ENCODE measurements at regions of chr3 and their contacts with region 1.

Region 1: GRCh38 chr3:126113733-126114442 is 30.0 kb upstream of the SLC41A3 start:
- DNase-seq: no peak
- ATAC-seq: peak; percentile 98
- H3K4me3 ChIP-seq: no peak overlapping the region
- H3K27ac ChIP-seq: no peak overlapping the region
- H3K4me1 ChIP-seq: peaks cover under 1 to 2% of the 10 kb centered on the region in 2 experiments; a peak in 2 of 4 replicates
- H3K27me3 ChIP-seq: no peaks in the 10 kb centered on the region
- CTCF ChIP-seq: peak in 2 of 3 experiments; percentile 65 to 74; a peak in 4 of 6 replicates
- POLR2A ChIP-seq: no peak
- RAD21 ChIP-seq: no peak; the same call in 1 of the 2 replicates

Region 2: GRCh38 chr3:125916376-125916978 is 197.4 kb before region 1 on chr3:
- CTCF ChIA-PET with region 1: no interaction called
- POLR2A ChIA-PET with region 1: no interaction called
- RAD21 ChIA-PET with region 1: no interaction called
- intact Hi-C with region 1: loop called (anchors 10 kb)
- DNase-seq: peak; percentile 79
- ATAC-seq: peak; percentile 87
- H3K4me3 ChIP-seq: peak overlapping the region; percentile 70 to 80
- H3K27ac ChIP-seq: peak overlapping the region; percentile 86
- H3K4me1 ChIP-seq: peaks cover 8 to 28% of the 10 kb centered on the region in 2 experiments
- H3K27me3 ChIP-seq: no peaks in the 10 kb centered on the region
- CTCF ChIP-seq: peak in 2 of 3 experiments; percentile 6 to 28; a peak in 1 of 6 replicates
- POLR2A ChIP-seq: no peak
- RAD21 ChIP-seq: peak; percentile 61

Region 3: DNA sequence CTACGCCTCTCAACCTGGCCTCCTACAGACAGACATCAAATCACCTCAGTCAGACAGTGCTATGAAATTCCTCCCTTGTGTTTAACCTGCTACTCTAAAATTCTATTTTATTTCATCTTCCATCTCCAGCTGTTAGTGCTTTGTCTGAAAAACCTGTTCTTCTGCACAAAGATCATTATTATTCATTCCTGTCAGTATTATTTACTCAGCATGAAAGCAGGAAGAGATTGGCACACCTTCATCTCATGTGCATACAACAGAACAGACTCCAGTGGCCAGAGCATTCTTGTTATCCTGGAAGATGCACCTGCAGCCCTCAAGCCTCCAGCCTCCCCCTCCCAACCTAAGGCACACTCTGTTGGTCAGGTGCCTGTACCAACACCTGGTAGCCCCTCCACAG is 146.8 kb before region 1 on chr3:
- CTCF ChIA-PET with region 1: no interaction called
- POLR2A ChIA-PET with region 1: no interaction called
- RAD21 ChIA-PET with region 1: no interaction called
- intact Hi-C with region 1: loop called (anchors 5 kb)
- DNase-seq: no peak
- ATAC-seq: no peak
- H3K4me3 ChIP-seq: no peak overlapping the region
- H3K27ac ChIP-seq: no peak overlapping the region
- H3K4me1 ChIP-seq: peaks cover 0 to 3% of the 10 kb centered on the region in 2 experiments; a peak in 2 of 4 replicates
- H3K27me3 ChIP-seq: no peaks in the 10 kb centered on the region
- CTCF ChIP-seq: no peak
- POLR2A ChIP-seq: no peak
- RAD21 ChIP-seq: no peak

Region 4: DNA sequence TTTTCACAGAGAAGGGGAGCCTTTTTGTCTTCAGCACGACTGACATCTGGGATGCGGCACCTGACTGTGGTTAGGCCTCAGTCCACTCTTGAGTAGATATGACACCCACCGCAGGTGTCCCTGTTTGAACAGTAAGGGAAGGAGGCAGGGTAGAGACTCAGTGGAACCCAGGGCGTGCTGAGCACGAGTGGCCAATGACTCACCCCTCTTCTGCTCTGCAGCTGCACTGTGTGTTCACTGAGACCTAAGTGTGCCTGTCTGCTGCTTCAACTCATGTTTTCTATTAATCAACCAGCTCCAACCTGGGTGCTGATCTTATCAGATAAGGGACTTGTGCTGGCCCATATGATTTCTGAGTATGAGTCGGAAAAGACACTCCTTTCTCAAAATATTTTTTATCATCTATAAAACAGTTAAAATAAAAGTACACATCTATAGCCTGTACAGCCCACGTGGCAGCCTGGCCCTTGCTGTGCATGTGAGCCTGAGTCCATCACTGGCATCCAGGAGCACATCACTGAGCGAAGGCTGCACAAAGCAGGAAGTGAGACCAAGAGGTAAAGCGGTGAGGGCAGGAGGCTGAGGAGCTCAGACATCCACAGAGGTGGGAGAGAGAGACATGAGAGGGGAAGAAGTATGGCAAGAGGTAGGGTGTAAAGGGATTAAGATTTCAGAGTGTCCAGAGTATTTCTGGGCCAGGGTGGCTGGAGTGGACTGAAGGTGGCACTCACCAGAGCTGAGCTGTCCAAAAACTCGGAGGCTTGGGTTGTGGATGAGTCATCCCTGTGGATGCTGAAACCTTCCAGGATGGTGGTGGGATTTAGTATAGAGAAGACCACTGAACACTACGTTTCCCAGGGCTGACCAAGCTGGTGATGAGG is 79.2 kb before region 1 on chr3:
- CTCF ChIA-PET with region 1: no interaction called
- POLR2A ChIA-PET with region 1: no interaction called
- RAD21 ChIA-PET with region 1: no interaction called
- intact Hi-C with region 1: no loop called
- DNase-seq: no peak
- ATAC-seq: no peak
- H3K4me3 ChIP-seq: no peak overlapping the region
- H3K27ac ChIP-seq: no peak overlapping the region
- H3K4me1 ChIP-seq: no peaks in the 10 kb centered on the region
- H3K27me3 ChIP-seq: no peaks in the 10 kb centered on the region
- CTCF ChIP-seq: no peak
- POLR2A ChIP-seq: no peak
- RAD21 ChIP-seq: no peak